GM18951 (cell line): ENCODE measurements at regions of chr1 and their contacts with region 1.

Region 1: GRCh38 chr1:227437495-227438008 is 119.3 kb upstream of the CDC42BPA start:
- POLR2A ChIP-seq: no peak

Region 2: GRCh38 chr1:226608699-226609505 is 828.6 kb before region 1 on chr1:
- in situ Hi-C with region 1: loop called (anchors 25 kb)
- POLR2A ChIP-seq: no peak

Region 3: DNA sequence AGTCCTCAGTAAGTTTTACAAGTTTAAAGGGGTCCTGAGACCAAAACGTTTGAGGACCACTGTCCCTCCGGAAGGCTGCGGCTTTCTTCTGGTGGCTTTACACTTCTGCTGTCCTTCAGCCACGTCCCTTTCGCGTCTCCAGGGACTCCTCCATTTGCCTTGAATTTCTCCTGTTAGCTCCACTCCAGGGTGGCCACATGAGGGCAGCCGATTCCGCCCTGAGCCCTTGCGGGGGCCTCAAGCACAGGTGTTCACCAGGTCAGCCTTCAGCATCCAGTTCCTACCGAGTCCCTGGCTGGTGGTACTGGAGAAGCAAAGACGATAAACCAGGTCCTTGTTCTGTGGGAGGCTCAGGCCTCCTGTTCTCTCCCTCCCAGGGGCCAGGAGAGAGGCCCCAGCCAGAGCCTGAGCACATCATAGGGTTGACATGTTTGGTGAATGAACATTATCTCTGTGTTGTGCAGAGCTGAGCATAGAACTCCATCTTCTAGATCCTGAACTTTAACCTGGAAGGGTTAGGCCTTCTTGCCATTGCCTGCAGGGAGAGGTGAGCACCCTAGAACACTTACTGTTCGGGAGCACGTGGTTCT is 524.9 kb before region 1 on chr1:
- in situ Hi-C with region 1: loop called (anchors 10 kb)
- POLR2A ChIP-seq: no peak

Region 4: DNA sequence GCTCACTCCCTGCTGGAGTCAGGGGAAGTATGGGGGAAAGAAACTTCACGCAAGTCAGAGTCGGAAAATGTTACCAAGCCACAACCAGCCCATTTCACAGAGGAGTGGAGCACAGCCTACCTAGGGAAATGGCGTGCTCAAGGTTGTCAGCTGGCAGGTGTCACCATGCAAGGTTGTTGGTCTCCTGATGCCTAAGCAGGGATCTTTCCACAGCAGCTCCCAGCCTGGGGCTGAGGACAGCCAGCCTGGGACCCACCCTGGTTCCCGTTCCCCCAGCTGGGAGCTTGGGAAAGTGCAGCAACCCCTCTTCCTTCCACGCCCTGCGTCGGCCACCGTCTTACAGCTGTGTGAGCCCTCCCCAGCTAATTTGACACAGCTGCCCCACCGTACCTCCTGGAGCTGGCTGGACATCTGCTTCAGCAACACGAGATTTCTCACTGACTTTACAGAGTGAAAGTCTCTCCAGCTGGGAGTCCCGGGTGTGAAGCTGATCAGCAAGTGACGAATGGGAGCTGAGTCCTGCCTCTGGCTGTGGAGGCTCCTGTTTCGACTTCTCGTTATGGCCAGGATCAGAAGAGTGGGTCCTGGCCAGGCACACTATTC is 1608.8 kb after region 1 on chr1:
- in situ Hi-C with region 1: no loop called
- POLR2A ChIP-seq: no peak